ENCODE measurements at regions of chr17 and their contacts with region 1.

Region 1: GRCh38 chr17:34542700-34543336 is 36.6 kb upstream of the TMEM132E start:
- DNase-seq: peak in 1 of 3 donors; percentile 65
- ATAC-seq: no peak
- H3K4me3 ChIP-seq: no peak overlapping the region
- H3K4me1 ChIP-seq: no peaks in the 10 kb centered on the region
- CTCF ChIP-seq: peak; percentile 66

Region 2: DNA sequence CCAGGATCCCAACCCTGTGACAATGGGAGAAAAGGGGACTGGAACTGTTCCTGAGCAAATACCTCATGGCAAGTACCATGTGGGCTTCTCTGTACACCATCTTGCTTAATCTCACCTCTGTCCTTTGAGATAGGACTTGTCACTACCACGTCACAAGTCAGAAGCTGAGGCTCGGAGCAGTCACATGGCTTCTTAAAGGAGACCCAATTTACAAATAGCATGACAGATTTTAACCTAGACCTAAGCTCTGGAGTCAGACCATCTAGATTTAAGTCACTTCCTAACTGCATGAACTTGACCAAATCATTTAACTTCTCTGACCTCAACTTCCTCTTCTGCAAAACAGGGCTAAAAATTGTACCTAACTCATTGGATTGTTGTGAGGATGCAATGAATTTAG is 143.8 kb before region 1 on chr17:
- intact Hi-C with region 1: no loop called
- DNase-seq: no peak
- ATAC-seq: peak; percentile 19
- H3K4me3 ChIP-seq: no peak overlapping the region
- H3K4me1 ChIP-seq: no peaks in the 10 kb centered on the region
- CTCF ChIP-seq: no peak

Region 3: GRCh38 chr17:34598161-34598776 is 55.5 kb after region 1 on chr17:
- intact Hi-C with region 1: no loop called
- DNase-seq: no peak
- ATAC-seq: no peak
- H3K4me3 ChIP-seq: no peak overlapping the region
- H3K4me1 ChIP-seq: no peaks in the 10 kb centered on the region
- CTCF ChIP-seq: no peak

Region 4: GRCh38 chr17:35119368-35120165 is 576.7 kb after region 1 on chr17 and contains the start of gene RAD51D:
- intact Hi-C with region 1: loop called (anchors 5 to 10 kb)
- DNase-seq: peak; percentile 74 to 85 (median 80)
- ATAC-seq: peak; percentile 99
- H3K4me3 ChIP-seq: peak within 1 kb of the TSS; percentile 57
- H3K4me1 ChIP-seq: peaks cover 9% of the 10 kb centered on the region
- CTCF ChIP-seq: peak; percentile 91
- total RNA-seq, gene RAD51D: 9.1 to 14.4 (median 11.6) TPM

Measured in mucosa of descending colon (tissue), 3 donors.